Panc1 (cell line): ENCODE measurements at regions of chr15 and their contacts with region 1.

Region 1: DNA sequence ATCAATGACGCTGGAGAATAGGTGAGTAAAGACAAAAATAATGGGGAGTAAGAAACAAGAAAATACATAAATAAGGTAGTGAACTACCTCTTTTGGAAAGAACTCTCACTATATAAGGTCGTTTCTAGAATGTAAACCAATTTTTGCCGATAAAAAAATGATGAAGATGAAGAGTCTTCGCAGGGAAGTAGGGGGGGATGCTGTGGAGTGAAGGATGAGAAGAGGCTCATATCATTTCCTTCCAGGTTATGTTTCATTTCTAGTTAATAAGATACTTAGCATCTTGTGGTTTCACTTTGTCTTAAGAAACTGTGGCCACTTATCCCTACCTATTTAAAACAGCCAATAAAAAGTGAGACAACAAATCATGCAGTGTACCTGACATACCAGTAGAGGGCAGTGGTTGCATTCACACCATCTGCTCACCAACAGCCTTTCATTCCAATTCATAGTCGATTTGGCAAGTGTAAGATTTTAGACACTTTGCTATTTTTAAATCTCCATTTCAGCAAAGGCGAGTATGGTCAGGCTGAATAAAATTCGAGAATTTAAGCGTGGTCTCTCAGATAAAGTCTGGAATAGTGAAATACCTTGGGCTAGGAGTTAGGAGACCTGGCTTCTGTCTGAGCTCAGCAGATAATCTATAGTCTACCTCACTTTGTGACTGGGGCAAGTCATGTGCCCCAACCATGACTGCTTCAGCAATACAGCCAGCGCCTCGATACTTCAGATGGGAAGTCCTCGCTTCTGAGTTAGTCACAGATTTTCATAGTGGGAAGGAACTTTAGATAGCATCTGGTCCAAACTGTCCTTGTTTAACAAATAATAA is 28.9 kb upstream of the ICE2 start:
- DNase-seq: no peak
- ATAC-seq: peak; percentile 85
- H3K4me3 ChIP-seq: peak overlapping the region in 1 of 2 experiments; percentile 25; a peak in 2 of 4 replicates
- H3K27ac ChIP-seq: no peak overlapping the region
- H3K4me1 ChIP-seq: 0 out of 2 replicates have a peak, but pooled peaks cover 2% of the 10 kb centered on the region
- H3K27me3 ChIP-seq: no peaks in the 10 kb centered on the region
- CTCF ChIP-seq: peak; percentile 91

Region 2: DNA sequence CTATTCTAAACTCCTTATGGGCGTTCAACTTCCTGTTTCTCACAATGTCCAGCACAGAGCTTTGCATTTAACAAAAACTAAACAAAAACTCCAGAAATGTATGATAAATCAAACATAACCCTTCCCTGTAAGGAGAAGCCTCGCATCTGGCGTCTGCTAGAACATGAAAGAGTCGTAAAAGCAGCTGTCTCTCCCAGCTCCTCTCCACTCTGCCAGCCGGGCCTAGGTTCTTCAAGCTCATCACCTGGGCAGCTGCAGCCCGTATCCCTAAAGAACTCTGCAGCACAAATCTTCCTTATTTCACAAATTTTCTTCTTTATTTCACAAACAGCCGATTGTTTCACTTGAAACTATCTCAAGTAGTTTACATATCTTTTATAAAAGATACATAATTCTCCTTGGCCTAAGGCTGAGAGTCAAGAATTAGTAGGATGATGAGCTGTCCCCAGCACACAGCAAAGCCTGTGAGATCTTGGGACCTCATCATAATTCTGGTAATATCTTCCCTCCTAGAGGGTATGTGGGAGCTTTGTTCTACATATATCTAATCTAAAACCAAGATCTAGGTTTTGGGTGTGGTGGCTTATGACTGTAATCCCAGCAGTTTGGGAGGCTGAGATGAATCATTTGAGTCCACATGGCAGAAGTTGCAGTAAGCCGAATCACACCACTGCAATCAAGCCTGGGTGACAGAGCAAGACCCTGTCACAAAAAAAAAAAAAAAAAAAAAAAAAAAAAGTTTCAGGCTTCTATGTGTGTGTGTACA is 145.3 kb before region 1 on chr15:
- CTCF ChIA-PET with region 1: no interaction called
- POLR2A ChIA-PET with region 1: no interaction called
- in situ Hi-C with region 1: no loop called
- intact Hi-C with region 1: loop called (anchors 10 kb)
- DNase-seq: peak; percentile 88
- ATAC-seq: peak; percentile 47
- H3K4me3 ChIP-seq: no peak overlapping the region
- H3K27ac ChIP-seq: peak overlapping the region; percentile 100
- H3K4me1 ChIP-seq: peaks cover 77% of the 10 kb centered on the region
- H3K27me3 ChIP-seq: no peaks in the 10 kb centered on the region
- CTCF ChIP-seq: no peak

Region 3: DNA sequence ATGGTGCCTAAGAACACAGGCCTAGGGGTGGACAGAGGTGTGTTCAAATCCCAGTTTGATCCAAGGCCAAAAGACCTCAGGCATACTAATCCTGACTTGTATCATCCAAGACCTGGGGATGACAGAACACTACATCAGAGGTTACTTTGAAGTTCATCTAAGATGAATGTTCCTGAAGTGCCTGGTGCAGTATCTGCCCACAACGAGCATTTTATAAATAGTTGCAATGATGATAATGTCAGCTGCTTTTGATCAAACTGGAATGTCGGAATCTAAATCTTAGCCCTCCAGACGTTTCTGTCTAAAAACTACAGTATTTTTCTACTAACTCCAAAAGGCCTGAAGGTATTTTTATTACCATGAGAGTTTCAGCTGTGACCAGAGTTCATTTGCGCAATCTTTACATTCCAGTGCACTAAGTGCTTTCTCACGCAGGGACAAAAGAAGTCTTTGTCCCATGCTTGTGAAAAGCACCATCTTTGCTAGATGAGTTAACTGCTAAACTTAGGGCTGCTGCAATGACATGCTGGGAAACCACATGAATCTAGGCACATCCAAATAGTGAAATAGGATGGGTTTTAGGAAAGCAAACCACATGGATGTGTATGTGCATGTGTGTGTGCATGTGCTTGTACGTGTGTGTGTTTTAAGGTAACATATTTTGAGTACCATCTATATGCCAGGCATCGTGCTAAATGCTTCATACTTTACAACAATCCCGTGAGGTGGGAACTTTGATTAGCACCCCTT is 128.1 kb before region 1 on chr15:
- CTCF ChIA-PET with region 1: no interaction called
- POLR2A ChIA-PET with region 1: interaction called, 22 read pairs
- in situ Hi-C with region 1: no loop called
- intact Hi-C with region 1: no loop called
- DNase-seq: no peak
- ATAC-seq: peak; percentile 54
- H3K4me3 ChIP-seq: no peak overlapping the region
- H3K27ac ChIP-seq: peak overlapping the region; percentile 100
- H3K4me1 ChIP-seq: peaks cover 99% of the 10 kb centered on the region
- H3K27me3 ChIP-seq: no peaks in the 10 kb centered on the region
- CTCF ChIP-seq: no peak

Region 4: GRCh38 chr15:60548101-60548500 is 40.3 kb after region 1 on chr15:
- CTCF ChIA-PET with region 1: no interaction called
- POLR2A ChIA-PET with region 1: no interaction called
- in situ Hi-C with region 1: no loop called
- intact Hi-C with region 1: loop called (anchors 5 kb)
- DNase-seq: no peak
- ATAC-seq: no peak
- H3K4me3 ChIP-seq: no peak overlapping the region
- H3K27ac ChIP-seq: no peak overlapping the region
- H3K4me1 ChIP-seq: no peaks in the 10 kb centered on the region
- H3K27me3 ChIP-seq: peaks cover 3% of the 10 kb centered on the region; the same call in 1 of the 2 replicates
- CTCF ChIP-seq: no peak

Region 5: GRCh38 chr15:60673918-60674558 is 166.2 kb after region 1 on chr15:
- CTCF ChIA-PET with region 1: no interaction called
- POLR2A ChIA-PET with region 1: no interaction called
- in situ Hi-C with region 1: no loop called
- intact Hi-C with region 1: no loop called
- DNase-seq: peak; percentile 10
- ATAC-seq: peak; percentile 75
- H3K4me3 ChIP-seq: no peak overlapping the region
- H3K27ac ChIP-seq: no peak overlapping the region
- H3K4me1 ChIP-seq: no peaks in the 10 kb centered on the region
- H3K27me3 ChIP-seq: peaks cover 4% of the 10 kb centered on the region
- CTCF ChIP-seq: no peak